Panc1 (cell line): ENCODE measurements at regions of chr1 and their contacts with region 1.

Region 1: GRCh38 chr1:23376890-23377811 is 7.5 kb upstream of the ZNF436 start:
- DNase-seq: peak; percentile 98
- ATAC-seq: peak; percentile 94
- H3K4me3 ChIP-seq: peak overlapping the region in 1 of 2 experiments; percentile 2; a peak in 1 of 4 replicates
- H3K27ac ChIP-seq: peak overlapping the region; percentile 89
- H3K4me1 ChIP-seq: peaks cover 26% of the 10 kb centered on the region
- H3K27me3 ChIP-seq: no peaks in the 10 kb centered on the region
- CTCF ChIP-seq: no peak

Region 2: DNA sequence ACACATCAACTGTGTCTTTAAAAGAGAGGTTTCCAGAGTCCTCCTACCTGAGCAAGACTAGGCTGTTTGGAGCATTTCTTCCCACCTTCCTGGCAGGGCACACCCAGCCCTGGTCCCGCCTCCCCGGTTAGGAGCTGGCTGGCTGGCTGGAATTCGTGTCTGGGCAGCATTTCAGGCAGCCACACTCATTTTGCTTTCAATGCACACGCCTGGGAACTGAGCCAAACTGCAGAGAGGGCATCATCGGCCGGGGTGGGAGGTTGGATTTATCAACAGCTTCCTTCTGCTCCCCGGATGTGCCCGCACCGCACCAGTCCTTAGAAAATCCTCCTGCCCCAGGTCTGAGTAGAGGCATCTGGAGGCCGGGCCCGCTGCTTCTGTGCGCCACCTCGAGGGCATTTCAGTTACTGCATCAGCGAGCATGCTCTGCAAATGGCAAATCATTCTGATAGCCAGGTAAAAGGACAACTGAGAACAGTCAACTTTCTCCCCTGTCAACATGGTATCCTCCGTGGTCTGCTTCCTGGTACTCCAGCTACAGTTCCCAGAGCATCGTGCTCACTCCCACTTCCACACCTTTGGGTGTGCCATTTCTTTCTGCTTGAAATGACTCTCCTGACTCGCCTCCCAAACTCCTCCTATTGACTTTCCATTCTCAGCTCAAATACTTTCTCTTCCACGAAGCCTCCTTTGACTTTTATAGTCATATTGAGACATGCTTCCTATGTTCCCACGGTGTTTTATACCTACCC is 26.8 kb after region 1 on chr1:
- CTCF ChIA-PET with region 1: interaction called, 10 read pairs
- POLR2A ChIA-PET with region 1: no interaction called
- in situ Hi-C with region 1: no loop called
- intact Hi-C with region 1: no loop called
- DNase-seq: peak; percentile 77
- ATAC-seq: peak; percentile 96
- H3K4me3 ChIP-seq: peak overlapping the region; percentile 29 to 48
- H3K27ac ChIP-seq: peak overlapping the region; percentile 95
- H3K4me1 ChIP-seq: peaks cover 25% of the 10 kb centered on the region
- H3K27me3 ChIP-seq: no peaks in the 10 kb centered on the region
- CTCF ChIP-seq: peak; percentile 99

Region 3: DNA sequence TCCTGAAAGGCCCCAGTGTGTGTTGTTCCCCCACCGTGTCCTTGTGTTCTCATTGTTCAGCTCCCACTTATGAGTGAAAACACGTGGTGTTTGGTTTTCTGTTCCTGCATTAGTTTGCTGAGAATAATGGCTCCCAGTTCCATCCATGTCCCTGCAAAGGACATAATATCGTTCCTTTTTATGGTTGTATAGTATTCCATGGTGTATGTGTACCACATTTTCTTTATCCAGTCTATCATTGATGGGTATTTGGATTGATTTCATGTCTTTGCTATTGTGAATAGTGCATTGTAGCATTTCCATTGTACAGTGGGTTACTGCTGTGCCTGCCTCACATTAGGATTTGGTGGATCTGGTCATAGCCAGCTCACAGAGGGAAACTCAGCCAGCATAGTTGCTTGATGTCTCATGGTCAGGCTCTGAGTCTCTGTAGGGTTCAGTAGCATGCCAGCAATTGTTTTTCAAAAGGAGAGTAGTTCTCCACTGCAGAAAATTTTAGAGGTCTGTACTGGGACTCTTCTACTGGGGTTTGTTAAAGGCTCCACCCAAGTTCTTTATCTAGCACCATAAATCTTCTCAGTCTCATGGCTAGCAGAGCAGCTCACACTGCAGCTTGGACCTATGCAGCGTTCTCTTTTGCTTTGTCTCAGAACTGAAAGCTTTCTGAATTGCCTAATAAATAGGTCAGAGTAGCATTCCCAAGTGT is 1512.0 kb after region 1 on chr1:
- CTCF ChIA-PET with region 1: no interaction called
- POLR2A ChIA-PET with region 1: no interaction called
- in situ Hi-C with region 1: no loop called
- intact Hi-C with region 1: no loop called
- DNase-seq: no peak
- ATAC-seq: no peak
- H3K4me3 ChIP-seq: no peak overlapping the region
- H3K27ac ChIP-seq: no peak overlapping the region
- H3K4me1 ChIP-seq: no peaks in the 10 kb centered on the region
- H3K27me3 ChIP-seq: peaks cover 3% of the 10 kb centered on the region; the same call in 1 of the 2 replicates
- CTCF ChIP-seq: no peak